Activated CD4-positive, alpha-beta T cell treated with anti-CD3 and anti-CD28 coated beads, Interleukin-2, amount 10 ng/mL, durations not matched to agents 7 days and 5 days (primary cell): ENCODE measurements at regions of chr2 and their contacts with region 1.

Region 1: GRCh38 chr2:195586062-195586714 is 70.8 kb upstream of the SLC39A10 start:
- DNase-seq: no peak
- H3K4me3 Mint-ChIP-seq: no peak overlapping the region
- H3K27ac Mint-ChIP-seq: no peak overlapping the region
- H3K4me1 Mint-ChIP-seq: peaks cover 6% of the 10 kb centered on the region
- H3K27me3 Mint-ChIP-seq: no peaks in the 10 kb centered on the region

Region 2: DNA sequence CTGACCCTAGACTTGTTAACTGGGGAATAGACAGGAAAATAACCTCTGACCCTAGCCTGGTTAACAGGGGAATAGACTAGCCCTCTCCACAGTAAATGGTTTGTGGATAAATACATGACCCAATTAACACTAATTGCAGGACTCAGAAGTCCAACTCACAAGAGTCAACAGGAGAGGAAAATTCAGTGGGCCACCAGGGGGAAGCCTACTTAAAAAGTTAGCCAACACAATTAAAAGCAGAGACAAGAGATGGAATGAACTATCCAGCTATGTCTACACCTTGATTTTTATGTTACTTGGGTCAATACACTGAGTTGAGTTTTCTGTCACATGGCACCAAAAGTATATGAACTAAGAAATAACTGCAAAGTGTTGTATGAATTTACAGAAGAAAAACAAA is 88.0 kb before region 1 on chr2:
- CTCF ChIA-PET with region 1: no interaction called
- POLR2A ChIA-PET with region 1: no interaction called
- DNase-seq: peak; percentile 52
- H3K4me3 Mint-ChIP-seq: no peak overlapping the region
- H3K27ac Mint-ChIP-seq: no peak overlapping the region
- H3K4me1 Mint-ChIP-seq: peaks cover 43% of the 10 kb centered on the region
- H3K27me3 Mint-ChIP-seq: no peaks in the 10 kb centered on the region

Region 3: GRCh38 chr2:195575879-195576401 is 10.2 kb before region 1 on chr2:
- CTCF ChIA-PET with region 1: interaction called, 11 read pairs
- POLR2A ChIA-PET with region 1: no interaction called
- DNase-seq: no peak
- H3K4me3 Mint-ChIP-seq: peak overlapping the region; percentile 35
- H3K27ac Mint-ChIP-seq: peak overlapping the region; percentile 83
- H3K4me1 Mint-ChIP-seq: peaks cover 74% of the 10 kb centered on the region
- H3K27me3 Mint-ChIP-seq: no peaks in the 10 kb centered on the region

Region 4: GRCh38 chr2:196046123-196046917 is 460.1 kb after region 1 on chr2:
- CTCF ChIA-PET with region 1: no interaction called
- POLR2A ChIA-PET with region 1: no interaction called
- DNase-seq: no peak
- H3K4me3 Mint-ChIP-seq: no peak overlapping the region
- H3K27ac Mint-ChIP-seq: no peak overlapping the region
- H3K4me1 Mint-ChIP-seq: no peaks in the 10 kb centered on the region
- H3K27me3 Mint-ChIP-seq: peaks cover 11% of the 10 kb centered on the region